Posterior vena cava (tissue), 2 donors: ENCODE measurements at regions of chr11 and their contacts with region 1.

Region 1: GRCh38 chr11:64000026-64000739 is 13.9 kb downstream of the OTUB1 start:
- DNase-seq: peak; percentile 90

Region 2: GRCh38 chr11:63698976-63699733 is 301.0 kb before region 1 on chr11:
- intact Hi-C with region 1: loop called in 1 of 2 experiments (anchors 5 kb)
- DNase-seq: no peak

Region 3: DNA sequence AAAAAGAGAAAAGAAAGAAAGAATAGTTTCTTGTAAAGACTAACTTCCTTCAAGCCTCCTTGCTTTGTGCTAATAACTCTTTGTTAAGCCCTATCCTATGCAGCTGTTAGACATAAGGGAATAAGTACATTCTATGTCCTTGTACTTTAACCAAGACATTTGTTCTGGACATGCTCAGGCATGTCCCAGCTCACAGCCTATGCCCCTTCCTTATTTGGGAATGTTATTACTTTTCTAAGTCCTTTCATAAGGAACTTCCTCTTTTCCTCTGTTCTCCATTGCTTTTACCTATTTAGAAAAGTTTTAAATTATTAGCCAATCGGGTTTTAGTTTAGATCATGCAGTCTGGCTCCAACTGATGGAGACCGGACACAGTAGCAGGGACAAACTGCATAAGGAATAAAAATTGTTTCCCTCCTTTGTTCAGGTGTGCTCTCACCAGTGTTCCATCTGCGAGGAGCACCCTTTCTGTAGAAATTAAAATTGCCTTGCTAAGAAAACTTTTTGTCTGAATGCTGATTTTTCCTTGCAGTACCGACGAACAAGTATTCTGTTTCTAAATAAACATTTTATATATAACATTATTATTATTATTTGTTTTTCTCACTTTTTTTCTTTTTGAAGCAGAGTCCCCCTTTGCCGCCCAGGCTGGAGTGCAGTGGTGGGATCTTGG is 208.6 kb before region 1 on chr11:
- intact Hi-C with region 1: no loop called
- DNase-seq: no peak

Region 4: DNA sequence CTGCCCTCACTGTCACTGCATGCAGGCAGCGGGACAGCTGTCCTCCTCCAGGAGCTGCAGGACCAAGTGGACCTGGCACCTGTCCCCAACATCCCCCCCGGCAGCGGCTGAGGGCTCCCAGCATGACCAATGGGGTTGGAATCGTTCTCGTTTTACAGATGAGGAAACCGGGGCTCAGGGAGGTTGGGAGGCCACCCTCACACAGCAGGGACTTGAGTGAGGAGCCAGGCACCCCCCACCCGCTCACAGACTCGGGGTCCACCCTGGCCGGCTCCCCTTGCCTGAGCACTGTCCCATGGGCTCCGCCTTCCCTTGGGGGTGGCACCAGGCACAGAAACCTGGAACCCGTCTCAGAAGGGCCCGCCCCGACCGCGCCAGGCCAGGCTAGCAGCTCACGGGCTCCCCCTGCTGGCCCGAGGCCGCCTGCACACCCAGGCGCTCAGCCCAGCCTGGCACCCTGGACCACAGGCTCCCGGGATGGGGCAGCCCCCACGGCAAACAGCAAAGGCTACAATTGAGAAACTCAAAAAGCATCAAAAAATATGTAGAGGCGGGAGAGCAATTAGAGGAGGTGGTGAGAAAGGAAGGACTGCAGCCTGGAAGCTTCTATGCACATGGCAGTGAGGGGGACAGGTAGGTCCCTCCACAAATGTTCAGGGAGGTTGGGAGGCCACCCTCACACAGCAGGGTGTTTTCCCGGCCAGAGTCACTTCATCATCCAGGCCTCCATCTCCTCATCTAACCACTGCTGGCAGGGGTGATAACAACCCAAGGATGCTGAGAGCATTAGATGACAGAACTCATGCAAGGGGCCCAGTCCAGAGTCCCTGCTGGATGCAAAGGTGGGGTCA is 152.9 kb after region 1 on chr11:
- intact Hi-C with region 1: loop called (anchors 2 kb)
- DNase-seq: peak; percentile 90